ENCODE measurements at regions of chr9 and their contacts with region 1.

Region 1: DNA sequence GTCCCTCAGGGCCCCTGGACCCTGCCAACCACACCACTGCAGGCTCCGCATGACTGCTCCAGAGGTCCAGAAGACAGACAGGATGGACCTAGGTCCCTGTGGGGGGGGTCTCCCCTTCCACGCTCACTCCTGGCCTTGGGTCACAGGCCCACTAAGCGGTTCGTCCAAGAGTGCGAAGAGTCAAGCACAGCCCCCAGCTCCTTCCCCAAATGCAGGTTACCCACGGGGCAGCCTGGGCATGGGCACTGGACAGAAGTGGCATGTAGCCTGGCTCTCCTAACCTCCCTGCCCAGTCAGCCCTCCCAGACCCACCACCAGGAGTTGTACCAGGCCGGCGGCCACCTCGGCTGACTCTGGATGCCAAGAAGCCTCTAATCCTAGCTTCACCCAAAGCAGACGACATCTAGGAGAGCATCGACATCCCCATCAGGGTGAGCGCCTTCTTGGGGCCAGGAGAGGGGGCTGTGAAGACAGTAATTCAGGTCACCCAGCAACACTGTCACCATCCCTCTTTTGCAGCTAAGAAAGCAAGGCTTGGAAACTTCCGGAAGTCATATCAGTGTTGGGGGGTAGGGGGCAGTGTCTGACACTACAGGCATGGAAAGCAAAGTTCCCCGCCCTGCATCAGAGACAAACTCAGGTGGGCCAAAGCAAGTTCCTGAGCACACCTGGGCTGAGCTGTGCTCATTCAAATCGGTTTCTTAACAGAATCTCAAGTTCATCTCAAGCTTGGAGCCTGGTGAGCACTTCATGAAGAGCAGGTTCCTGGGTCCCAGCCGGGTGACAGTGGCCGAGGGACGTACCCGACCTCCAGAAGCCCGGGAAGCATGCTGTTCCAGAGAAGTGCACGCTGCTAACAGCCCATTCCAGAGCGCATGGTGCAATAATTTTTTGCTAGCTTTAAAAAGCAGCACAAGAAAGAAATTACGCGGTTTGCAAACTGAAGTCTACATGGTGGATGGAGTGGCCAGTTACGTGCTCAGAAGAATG is 68.7 kb downstream of the SEMA4D start:
- DNase-seq: no peak
- H3K4me3 Mint-ChIP-seq: peak overlapping the region; percentile 17
- H3K27ac Mint-ChIP-seq: peak overlapping the region; percentile 90
- H3K4me1 Mint-ChIP-seq: peaks cover 79% of the 10 kb centered on the region
- H3K27me3 Mint-ChIP-seq: no peaks in the 10 kb centered on the region

Region 2: DNA sequence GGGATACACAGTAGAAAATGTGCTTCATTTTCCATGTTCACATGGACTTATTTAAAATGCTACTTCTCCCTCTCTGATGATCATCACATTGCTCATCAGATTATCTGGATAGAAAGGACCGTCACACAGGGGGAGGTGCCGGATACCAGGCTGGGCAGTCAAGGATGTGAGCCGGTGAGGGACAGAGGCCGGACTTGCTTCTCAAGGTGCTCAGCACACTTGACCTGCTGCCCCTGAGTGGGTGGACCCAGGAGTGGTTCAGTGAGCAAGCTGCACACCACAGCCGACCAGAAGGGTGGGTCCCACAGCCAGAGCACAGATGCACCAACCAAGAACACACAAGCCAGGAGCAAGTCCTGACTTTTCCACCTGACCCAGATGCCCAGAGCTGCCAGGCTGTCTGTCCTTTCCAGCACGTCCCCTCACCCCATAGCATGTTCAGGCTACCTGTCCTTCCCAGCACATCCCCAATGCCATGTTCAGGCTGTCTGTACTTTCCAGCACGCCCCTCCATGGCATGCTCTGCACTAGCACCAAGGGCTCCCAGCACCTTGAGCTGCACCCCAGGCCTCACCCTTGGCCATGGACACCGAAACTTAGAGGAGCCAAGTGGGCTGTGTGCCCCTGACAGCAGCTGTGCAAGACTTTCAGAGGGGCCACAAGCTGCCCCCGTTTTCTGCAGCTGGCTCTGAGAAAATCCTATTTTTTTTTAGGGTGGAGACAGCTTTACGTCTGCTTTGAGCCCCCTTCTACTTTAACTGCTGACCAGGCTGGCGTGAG is 33.1 kb before region 1 on chr9:
- intact Hi-C with region 1: no loop called
- DNase-seq: no peak
- H3K4me3 Mint-ChIP-seq: no peak overlapping the region
- H3K27ac Mint-ChIP-seq: no peak overlapping the region
- H3K4me1 Mint-ChIP-seq: peaks cover 2% of the 10 kb centered on the region
- H3K27me3 Mint-ChIP-seq: no peaks in the 10 kb centered on the region

Region 3: DNA sequence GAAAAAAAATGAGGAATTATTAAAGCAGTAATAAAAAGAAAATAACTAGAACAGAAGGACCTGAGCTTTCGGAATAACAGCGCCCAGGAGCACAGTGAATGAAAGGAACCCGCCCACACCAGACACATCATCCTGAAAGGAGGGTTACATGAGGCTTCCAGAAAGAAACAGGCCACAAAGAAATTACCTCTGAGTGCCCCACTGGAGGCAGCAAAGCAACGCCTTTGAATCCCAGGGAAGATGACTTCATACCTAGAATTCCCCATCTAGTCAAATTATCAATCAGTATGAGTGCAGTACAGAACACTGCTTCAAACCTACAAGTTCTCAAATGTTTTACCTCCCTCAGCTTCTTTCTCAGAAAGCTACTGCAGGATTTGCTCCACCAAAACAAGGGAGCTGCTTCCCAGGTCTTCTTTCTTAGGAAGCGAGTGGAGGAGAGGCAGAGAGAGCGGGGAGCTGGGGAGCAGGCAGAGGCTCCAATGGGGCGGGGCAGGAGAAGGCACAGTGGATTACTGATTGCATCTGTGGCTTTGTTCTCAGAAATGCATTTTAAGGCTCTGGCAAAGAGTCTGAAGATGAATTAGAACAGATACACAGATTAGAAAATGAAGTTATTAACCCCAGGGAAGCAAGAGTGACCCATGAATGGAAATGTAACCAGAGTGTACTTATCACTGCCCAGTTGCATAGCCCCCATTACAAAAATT is 18.4 kb before region 1 on chr9:
- intact Hi-C with region 1: loop called (anchors 2 kb)
- DNase-seq: no peak
- H3K4me3 Mint-ChIP-seq: peak overlapping the region; percentile 64
- H3K27ac Mint-ChIP-seq: peak overlapping the region; percentile 95
- H3K4me1 Mint-ChIP-seq: peaks cover 84% of the 10 kb centered on the region
- H3K27me3 Mint-ChIP-seq: no peaks in the 10 kb centered on the region

Region 4: GRCh38 chr9:89418882-89419640 is 10.1 kb before region 1 on chr9:
- intact Hi-C with region 1: loop called (anchors 1 kb)
- DNase-seq: peak; percentile 72
- H3K4me3 Mint-ChIP-seq: peak overlapping the region; percentile 81
- H3K27ac Mint-ChIP-seq: peak overlapping the region; percentile 90
- H3K4me1 Mint-ChIP-seq: peaks cover 82% of the 10 kb centered on the region
- H3K27me3 Mint-ChIP-seq: no peaks in the 10 kb centered on the region

Region 5: GRCh38 chr9:89448381-89448780 is 19.2 kb after region 1 on chr9:
- intact Hi-C with region 1: loop called (anchors 2 kb)
- DNase-seq: no peak
- H3K4me3 Mint-ChIP-seq: peak overlapping the region; percentile 26
- H3K27ac Mint-ChIP-seq: peak overlapping the region; percentile 90
- H3K4me1 Mint-ChIP-seq: peaks cover 84% of the 10 kb centered on the region
- H3K27me3 Mint-ChIP-seq: no peaks in the 10 kb centered on the region

Region 6: GRCh38 chr9:89483592-89484522 is 54.7 kb after region 1 on chr9:
- intact Hi-C with region 1: no loop called
- DNase-seq: peak; percentile 57
- H3K4me3 Mint-ChIP-seq: peak overlapping the region; percentile 80
- H3K27ac Mint-ChIP-seq: peak overlapping the region; percentile 93
- H3K4me1 Mint-ChIP-seq: peaks cover 77% of the 10 kb centered on the region
- H3K27me3 Mint-ChIP-seq: no peaks in the 10 kb centered on the region

Region 7: GRCh38 chr9:89527084-89527483 is 97.9 kb after region 1 on chr9:
- intact Hi-C with region 1: no loop called
- DNase-seq: no peak
- H3K4me3 Mint-ChIP-seq: no peak overlapping the region
- H3K27ac Mint-ChIP-seq: peak overlapping the region; percentile 9
- H3K4me1 Mint-ChIP-seq: peaks cover 89% of the 10 kb centered on the region
- H3K27me3 Mint-ChIP-seq: no peaks in the 10 kb centered on the region

Region 8: DNA sequence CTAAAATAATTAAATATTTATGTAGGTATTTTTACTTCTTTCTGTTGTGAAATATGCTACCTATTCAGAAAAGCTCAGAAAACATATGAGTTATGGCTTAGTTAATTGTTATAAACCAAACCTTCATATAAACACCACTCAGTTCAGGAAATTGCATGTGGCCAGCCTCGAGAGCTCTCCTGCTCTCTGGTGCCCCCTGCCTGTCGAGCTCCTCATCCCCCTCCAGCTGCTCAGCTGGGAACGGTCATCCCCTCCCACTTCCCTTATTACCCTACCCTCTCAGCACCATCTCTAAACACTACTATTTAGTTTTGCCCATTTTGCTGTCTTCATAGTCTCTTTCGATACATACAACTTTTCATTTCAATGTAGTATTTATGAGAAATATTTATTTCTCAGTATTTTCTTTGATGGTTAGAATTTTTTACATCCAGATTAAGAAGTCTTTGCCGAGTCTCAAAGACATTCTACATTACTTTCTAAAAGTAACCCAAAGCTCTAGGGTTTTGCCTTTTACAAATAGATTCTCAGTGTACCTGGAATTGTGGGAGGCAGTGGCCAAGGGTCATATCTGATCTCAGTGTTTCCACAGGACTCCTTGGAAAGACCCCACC is 119.9 kb after region 1 on chr9:
- intact Hi-C with region 1: loop called (anchors 1 kb)
- DNase-seq: peak; percentile 76
- H3K4me3 Mint-ChIP-seq: no peak overlapping the region
- H3K27ac Mint-ChIP-seq: peak overlapping the region; percentile 5
- H3K4me1 Mint-ChIP-seq: peaks cover 23% of the 10 kb centered on the region
- H3K27me3 Mint-ChIP-seq: peaks cover 7% of the 10 kb centered on the region